Dendritic cell treated with granulocyte-macrophage colony-stimulating factor and Interleukin-4, amounts not matched to agents 40 ng/mL and 50 ng/mL, for 4 days (primary cell): ENCODE measurements at regions of chr11 and their contacts with region 1.

Region 1: GRCh38 chr11:41461057-41461681 is 1.7 kb upstream of the LRRC4C start:
- H3K4me3 Mint-ChIP-seq: no peak overlapping the region
- H3K27ac Mint-ChIP-seq: no peak overlapping the region
- H3K4me1 Mint-ChIP-seq: no peaks in the 10 kb centered on the region
- H3K27me3 Mint-ChIP-seq: peaks cover 15% of the 10 kb centered on the region

Region 2: DNA sequence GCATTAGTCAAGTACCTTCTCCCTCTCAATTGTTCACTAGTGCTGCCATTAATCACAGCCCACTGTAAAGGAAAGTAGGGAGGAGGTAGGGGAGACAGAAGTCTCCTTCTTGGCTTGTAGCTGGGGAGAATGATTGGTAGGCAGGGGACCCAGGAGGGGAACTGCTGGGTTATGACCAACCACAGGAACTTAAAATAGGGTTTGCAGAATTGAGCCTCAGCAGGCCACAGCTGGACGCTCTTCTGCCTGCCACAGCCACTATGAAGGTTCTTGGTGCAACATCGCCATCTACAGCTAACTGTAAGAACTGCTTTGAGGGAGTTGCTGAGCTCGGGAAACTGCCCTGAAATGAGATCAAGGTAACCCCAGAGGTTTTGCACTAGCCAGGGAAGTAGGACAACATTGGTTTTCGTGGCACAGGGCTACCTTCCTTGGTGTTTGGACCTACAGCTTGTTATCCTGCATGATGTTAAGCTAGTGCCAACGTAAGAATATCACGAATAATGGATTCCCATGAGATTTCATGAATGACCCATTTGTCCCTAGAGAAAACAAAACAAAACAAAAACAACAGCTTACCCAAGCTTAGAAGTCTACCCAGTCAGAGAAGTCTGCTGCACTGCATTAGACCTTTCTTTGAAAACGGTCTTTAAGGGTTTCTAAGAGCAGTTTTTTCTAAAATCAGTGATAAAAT is 1063.5 kb after region 1 on chr11:
- intact Hi-C with region 1: loop called (anchors 2 kb)
- H3K4me3 Mint-ChIP-seq: no peak overlapping the region
- H3K27ac Mint-ChIP-seq: no peak overlapping the region
- H3K4me1 Mint-ChIP-seq: no peaks in the 10 kb centered on the region
- H3K27me3 Mint-ChIP-seq: no peaks in the 10 kb centered on the region